ENCODE measurements at regions of chr5 and their contacts with region 1.

Region 1: GRCh38 chr5:172795318-172795977 is 24.5 kb upstream of the DUSP1 start:
- DNase-seq: peak; percentile 98 to 99 (median 99)
- H3K4me3 ChIP-seq: no peak overlapping the region
- H3K27ac ChIP-seq: peak overlapping the region; percentile 4 to 77
- H3K4me1 ChIP-seq: peaks cover 13% of the 10 kb centered on the region
- H3K27me3 ChIP-seq: no peaks in the 10 kb centered on the region
- CTCF ChIP-seq: peak in 2 of 3 donors; percentile 21 to 47
- EP300 ChIP-seq: peak; percentile 99
- POLR2A ChIP-seq: peak; percentile 34

Region 2: DNA sequence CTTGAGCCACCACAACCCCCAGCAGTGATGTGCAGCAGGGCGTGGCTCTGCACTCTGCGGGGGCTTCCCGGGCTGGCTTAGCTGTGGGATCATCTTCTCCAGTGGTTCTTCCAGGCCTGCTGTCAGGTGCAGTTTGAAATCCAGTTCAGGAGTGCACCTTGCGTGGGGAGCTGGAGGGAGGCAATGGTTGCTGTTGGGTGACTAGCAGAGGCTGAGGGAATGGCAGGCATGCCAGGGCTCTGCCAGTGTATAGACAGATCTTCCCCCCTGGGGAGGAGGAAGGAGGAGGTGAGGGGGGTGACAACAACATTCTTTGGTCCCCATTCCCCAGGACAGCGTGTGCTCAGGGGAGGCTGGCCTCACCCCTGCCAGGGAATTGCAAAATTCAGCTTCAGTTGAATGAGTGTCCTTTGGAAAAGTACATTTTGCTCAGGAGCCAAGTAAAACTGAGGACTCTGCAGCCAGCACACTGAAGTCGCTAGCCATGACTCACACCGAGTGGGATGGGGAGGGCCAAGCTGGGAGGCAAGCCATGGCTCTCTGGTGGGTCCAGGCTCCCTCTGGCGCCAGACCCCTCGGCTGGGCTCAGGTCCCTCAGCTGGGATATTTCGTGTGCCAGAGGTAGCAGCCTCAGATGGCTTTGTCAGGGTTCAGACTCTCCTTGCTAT is 73.6 kb after region 1 on chr5:
- intact Hi-C with region 1: loop called in 3 of 4 experiments (anchors 5 to 10 kb)
- DNase-seq: peak; percentile 84 to 92 (median 87)
- H3K4me3 ChIP-seq: no peak overlapping the region
- H3K27ac ChIP-seq: peak overlapping the region; percentile 63 to 76
- H3K4me1 ChIP-seq: peaks cover 56% of the 10 kb centered on the region
- H3K27me3 ChIP-seq: no peaks in the 10 kb centered on the region
- CTCF ChIP-seq: peak in 2 of 3 donors; percentile 59 to 64
- EP300 ChIP-seq: peak; percentile 95
- POLR2A ChIP-seq: no peak

Region 3: DNA sequence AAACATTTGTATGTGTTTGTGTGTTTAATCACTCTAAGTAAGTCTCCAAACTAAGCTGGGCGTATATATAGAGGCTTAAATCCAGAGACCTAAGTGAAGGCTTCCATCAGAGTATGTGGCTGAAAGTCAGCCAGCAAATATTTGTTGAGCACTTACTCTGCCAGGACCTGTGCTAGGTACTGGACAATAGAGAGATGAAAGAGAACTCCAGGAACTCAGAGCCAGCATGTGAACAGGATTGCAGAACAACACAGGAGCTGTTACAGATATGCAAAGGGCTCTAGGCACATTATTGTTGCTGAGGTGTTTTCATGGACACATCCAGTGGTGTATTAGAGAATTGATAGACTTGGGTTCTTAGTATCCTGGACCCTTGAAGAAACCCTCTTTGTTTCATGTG is 344.2 kb after region 1 on chr5:
- intact Hi-C with region 1: no loop called
- DNase-seq: no peak
- H3K4me3 ChIP-seq: no peak overlapping the region
- H3K27ac ChIP-seq: no peak overlapping the region
- H3K4me1 ChIP-seq: no peaks in the 10 kb centered on the region
- H3K27me3 ChIP-seq: no peaks in the 10 kb centered on the region
- CTCF ChIP-seq: no peak
- EP300 ChIP-seq: no peak
- POLR2A ChIP-seq: no peak